Transverse colon (tissue), 4 donors: ENCODE measurements at regions of chr5 and their contacts with region 1.

Region 1: GRCh38 chr5:7391814-7392692 is 3.9 kb upstream of the ADCY2 start:
- DNase-seq: no peak
- H3K4me3 ChIP-seq: no peak overlapping the region
- H3K27ac ChIP-seq: peak overlapping the region in 1 of 4 donors; percentile 23
- H3K4me1 ChIP-seq: peaks cover 0 to 21% (median 9%) of the 10 kb centered on the region in 4 donors
- H3K27me3 ChIP-seq: peaks cover 30% of the 10 kb centered on the region
- CTCF ChIP-seq: peak; percentile 45 to 53 (median 52)
- EP300 ChIP-seq: no peak
- POLR2A ChIP-seq: no peak

Region 2: GRCh38 chr5:6780802-6781391 is 611.2 kb before region 1 on chr5:
- in situ Hi-C with region 1: loop called in 1 of 4 experiments (anchors 25 kb)
- intact Hi-C with region 1: no loop called
- DNase-seq: no peak
- H3K4me3 ChIP-seq: no peak overlapping the region
- H3K27ac ChIP-seq: no peak overlapping the region
- H3K4me1 ChIP-seq: no peaks in the 10 kb centered on the region
- H3K27me3 ChIP-seq: no peaks in the 10 kb centered on the region
- CTCF ChIP-seq: peak in 3 of 5 experiments; percentile 12 to 27 (median 16)
- EP300 ChIP-seq: no peak
- POLR2A ChIP-seq: no peak

Region 3: DNA sequence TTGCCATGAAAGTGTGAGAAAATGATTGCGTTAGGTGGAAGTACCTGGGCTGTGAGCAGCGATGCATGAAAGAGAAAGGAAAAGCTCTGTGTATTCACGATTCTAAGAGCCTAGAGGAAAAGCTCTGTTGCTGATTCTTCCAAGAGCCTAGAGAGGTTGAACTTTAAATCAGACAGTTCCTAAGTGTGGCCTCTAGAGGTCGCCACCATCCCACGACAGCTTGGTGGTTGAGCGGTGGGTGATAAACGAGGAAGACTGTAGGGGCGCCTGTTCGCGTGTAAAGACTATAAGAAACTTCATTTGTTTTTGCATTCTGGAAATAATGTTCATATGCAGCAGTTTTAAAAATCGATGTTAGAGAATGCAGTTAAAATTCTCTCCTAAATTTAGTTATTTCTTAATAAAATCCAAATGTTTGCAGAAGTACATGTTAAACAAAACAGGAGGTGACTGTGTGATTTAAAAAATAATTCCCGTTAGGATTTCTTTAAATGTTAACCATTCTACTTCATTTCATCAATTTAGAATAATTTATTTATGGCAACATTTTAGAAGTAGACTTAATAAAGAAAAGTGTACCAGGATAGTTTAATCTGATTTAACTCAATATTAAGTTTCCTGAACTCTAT is 571.1 kb before region 1 on chr5:
- in situ Hi-C with region 1: loop called in 1 of 4 experiments (anchors 25 kb)
- intact Hi-C with region 1: loop called (anchors 5 kb)
- DNase-seq: peak; percentile 21
- H3K4me3 ChIP-seq: no peak overlapping the region
- H3K27ac ChIP-seq: no peak overlapping the region
- H3K4me1 ChIP-seq: no peaks in the 10 kb centered on the region
- H3K27me3 ChIP-seq: peaks cover 34% of the 10 kb centered on the region
- CTCF ChIP-seq: peak; percentile 50 to 62 (median 55)
- EP300 ChIP-seq: no peak
- POLR2A ChIP-seq: no peak

Region 4: GRCh38 chr5:7348168-7348854 is 43.7 kb before region 1 on chr5:
- in situ Hi-C with region 1: no loop called
- intact Hi-C with region 1: no loop called
- DNase-seq: no peak
- H3K4me3 ChIP-seq: no peak overlapping the region
- H3K27ac ChIP-seq: no peak overlapping the region
- H3K4me1 ChIP-seq: no peaks in the 10 kb centered on the region
- H3K27me3 ChIP-seq: no peaks in the 10 kb centered on the region
- CTCF ChIP-seq: no peak
- EP300 ChIP-seq: no peak
- POLR2A ChIP-seq: no peak

Region 5: DNA sequence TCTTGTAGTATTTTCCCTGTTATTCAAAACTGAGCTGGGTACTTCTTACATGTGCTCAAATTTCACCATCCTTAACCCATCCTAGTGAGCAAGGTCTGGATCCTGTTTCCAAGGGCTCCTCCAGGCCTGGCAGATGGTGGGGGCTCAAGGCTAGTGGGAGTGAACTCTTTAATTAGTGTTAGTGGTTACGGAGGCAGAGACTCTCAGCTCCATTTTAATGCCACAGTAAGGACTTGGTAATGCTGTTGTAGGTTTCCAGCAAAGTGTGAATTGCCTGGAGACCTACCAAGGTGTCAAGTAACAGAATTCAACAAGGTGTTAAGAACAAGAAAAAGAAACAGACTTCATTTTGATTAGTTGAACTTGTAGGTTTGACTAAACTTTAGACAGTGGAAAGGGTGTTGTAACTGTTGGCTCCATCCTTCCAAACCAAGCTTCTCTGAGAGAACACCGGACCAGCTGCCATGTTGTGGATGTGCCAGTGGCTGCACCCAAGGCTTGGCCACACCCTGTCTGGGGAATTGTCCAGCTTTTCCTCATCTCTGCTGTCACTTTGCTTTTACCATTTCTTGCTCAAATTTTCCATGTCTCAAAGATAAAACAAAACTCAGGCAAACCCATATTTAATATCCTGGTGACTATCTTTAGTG is 102.6 kb after region 1 on chr5:
- in situ Hi-C with region 1: no loop called
- intact Hi-C with region 1: no loop called
- DNase-seq: no peak
- H3K4me3 ChIP-seq: no peak overlapping the region
- H3K27ac ChIP-seq: no peak overlapping the region
- H3K4me1 ChIP-seq: no peaks in the 10 kb centered on the region
- H3K27me3 ChIP-seq: no peaks in the 10 kb centered on the region
- CTCF ChIP-seq: no peak
- EP300 ChIP-seq: no peak
- POLR2A ChIP-seq: no peak

Region 6: GRCh38 chr5:7745882-7746610 is 354.0 kb after region 1 on chr5:
- in situ Hi-C with region 1: loop called in 1 of 4 experiments (anchors 10 kb)
- intact Hi-C with region 1: loop called (anchors 10 kb)
- DNase-seq: peak; percentile 65
- H3K4me3 ChIP-seq: no peak overlapping the region
- H3K27ac ChIP-seq: no peak overlapping the region
- H3K4me1 ChIP-seq: no peaks in the 10 kb centered on the region
- H3K27me3 ChIP-seq: no peaks in the 10 kb centered on the region
- CTCF ChIP-seq: peak; percentile 72 to 92 (median 84)
- EP300 ChIP-seq: no peak
- POLR2A ChIP-seq: no peak

Region 7: DNA sequence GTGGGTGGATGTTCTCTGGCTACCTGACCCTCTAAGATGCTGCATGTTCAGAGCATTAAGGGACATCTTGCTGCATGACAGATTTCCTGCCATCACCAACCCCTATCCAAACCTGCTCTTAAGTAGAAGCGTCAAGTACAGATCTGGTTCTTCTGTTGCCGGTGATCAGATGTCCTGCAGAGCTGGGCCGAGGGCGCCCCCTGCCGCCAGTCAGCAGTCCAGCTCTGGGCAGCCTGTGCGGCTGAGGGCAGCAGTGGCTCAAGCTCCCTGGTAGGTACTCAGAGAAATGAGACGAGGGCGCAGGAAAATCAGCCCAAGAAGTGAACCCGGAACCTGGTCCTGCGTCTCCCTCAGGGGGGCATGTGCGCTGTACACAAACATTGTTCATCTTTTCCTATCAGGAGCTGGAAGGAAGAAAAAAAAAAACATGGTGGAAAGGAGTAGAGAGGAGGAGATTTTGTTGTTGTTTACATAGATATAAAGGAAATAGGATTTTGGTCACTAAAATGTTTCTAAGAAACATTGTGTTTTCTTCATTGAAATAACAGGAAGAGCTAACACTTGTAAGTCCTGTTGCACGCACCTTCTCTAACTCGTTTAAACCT is 363.0 kb after region 1 on chr5:
- in situ Hi-C with region 1: no loop called
- intact Hi-C with region 1: loop called (anchors 10 kb)
- DNase-seq: peak; percentile 55
- H3K4me3 ChIP-seq: no peak overlapping the region
- H3K27ac ChIP-seq: no peak overlapping the region
- H3K4me1 ChIP-seq: no peaks in the 10 kb centered on the region
- H3K27me3 ChIP-seq: no peaks in the 10 kb centered on the region
- CTCF ChIP-seq: peak; percentile 45 to 70 (median 60)
- EP300 ChIP-seq: no peak
- POLR2A ChIP-seq: no peak

Region 8: GRCh38 chr5:7904170-7904569 is 512.1 kb after region 1 on chr5:
- in situ Hi-C with region 1: no loop called
- intact Hi-C with region 1: no loop called
- DNase-seq: no peak
- H3K4me3 ChIP-seq: no peak overlapping the region
- H3K27ac ChIP-seq: no peak overlapping the region
- H3K4me1 ChIP-seq: no peaks in the 10 kb centered on the region
- H3K27me3 ChIP-seq: no peaks in the 10 kb centered on the region
- CTCF ChIP-seq: no peak
- EP300 ChIP-seq: no peak
- POLR2A ChIP-seq: no peak